CD14-positive monocyte (primary cell): ENCODE measurements at regions of chr15 and their contacts with region 1.

Region 1: GRCh38 chr15:74540761-74541493 is at the start of gene ARID3B:
- DNase-seq: peak; percentile 97 to 98 (median 97)
- H3K4me3 ChIP-seq: peak within 1 kb of the TSS; percentile 79 to 91 (median 84)
- H3K4me3 Mint-ChIP-seq: peak within 1 kb of the TSS; percentile 92 to 96
- H3K27ac ChIP-seq: peak within 1 kb of the TSS; percentile 69 to 84
- H3K27ac Mint-ChIP-seq: peak within 1 kb of the TSS; percentile 89 to 97 (median 95)
- H3K4me1 ChIP-seq: peaks cover 30 to 49% of the 10 kb centered on the region in 2 donors
- H3K4me1 Mint-ChIP-seq: peaks cover 46% of the 10 kb centered on the region
- H3K27me3 ChIP-seq: no peaks in the 10 kb centered on the region
- H3K27me3 Mint-ChIP-seq: peaks cover 3 to 8% (median 7%) of the 10 kb centered on the region in 3 donors
- CTCF ChIP-seq: no peak
- polyA plus RNA-seq, gene ARID3B: 2.3 to 17.4 (median 4.4) TPM

Region 2: GRCh38 chr15:74449643-74450205 is 91.2 kb before region 1 on chr15:
- intact Hi-C with region 1: no loop called
- DNase-seq: no peak
- H3K4me3 ChIP-seq: no peak overlapping the region
- H3K4me3 Mint-ChIP-seq: no peak overlapping the region
- H3K27ac ChIP-seq: no peak overlapping the region
- H3K27ac Mint-ChIP-seq: peak overlapping the region in 1 of 7 donors; percentile 21
- H3K4me1 ChIP-seq: no peaks in the 10 kb centered on the region
- H3K4me1 Mint-ChIP-seq: no peaks in the 10 kb centered on the region
- H3K27me3 ChIP-seq: no peaks in the 10 kb centered on the region
- H3K27me3 Mint-ChIP-seq: peaks cover 0 to 2% (median 1%) of the 10 kb centered on the region in 3 donors
- CTCF ChIP-seq: no peak

Region 3: GRCh38 chr15:74460871-74461846 is 79.8 kb before region 1 on chr15 and contains the start of gene UBL7:
- intact Hi-C with region 1: loop called (anchors 2 to 5 kb)
- DNase-seq: peak; percentile 94 to 96 (median 95)
- H3K4me3 ChIP-seq: peak within 1 kb of the TSS; percentile 63 to 93 (median 77)
- H3K4me3 Mint-ChIP-seq: peak within 1 kb of the TSS; percentile 94 to 95
- H3K27ac ChIP-seq: peak within 1 kb of the TSS; percentile 57 to 81
- H3K27ac Mint-ChIP-seq: peak within 1 kb of the TSS; percentile 86 to 96 (median 93)
- H3K4me1 ChIP-seq: peaks cover 18 to 27% of the 10 kb centered on the region in 2 donors
- H3K4me1 Mint-ChIP-seq: peaks cover 32% of the 10 kb centered on the region
- H3K27me3 ChIP-seq: no peaks in the 10 kb centered on the region
- H3K27me3 Mint-ChIP-seq: peaks cover 0 to 2% (median 0%) of the 10 kb centered on the region in 3 donors
- CTCF ChIP-seq: no peak
- polyA plus RNA-seq, gene UBL7: 43.4 to 103 (median 95.1) TPM

Region 4: GRCh38 chr15:74584779-74585178 is 43.9 kb after region 1 on chr15:
- intact Hi-C with region 1: no loop called
- DNase-seq: no peak
- H3K4me3 ChIP-seq: no peak overlapping the region
- H3K4me3 Mint-ChIP-seq: no peak overlapping the region
- H3K27ac ChIP-seq: no peak overlapping the region
- H3K27ac Mint-ChIP-seq: peak overlapping the region in 2 of 7 donors; percentile 26 to 75
- H3K4me1 ChIP-seq: peaks cover 17 to 18% of the 10 kb centered on the region in 2 donors
- H3K4me1 Mint-ChIP-seq: peaks cover 18% of the 10 kb centered on the region
- H3K27me3 ChIP-seq: no peaks in the 10 kb centered on the region
- H3K27me3 Mint-ChIP-seq: peaks cover 0 to 2% (median 0%) of the 10 kb centered on the region in 3 donors
- CTCF ChIP-seq: no peak

Region 5: DNA sequence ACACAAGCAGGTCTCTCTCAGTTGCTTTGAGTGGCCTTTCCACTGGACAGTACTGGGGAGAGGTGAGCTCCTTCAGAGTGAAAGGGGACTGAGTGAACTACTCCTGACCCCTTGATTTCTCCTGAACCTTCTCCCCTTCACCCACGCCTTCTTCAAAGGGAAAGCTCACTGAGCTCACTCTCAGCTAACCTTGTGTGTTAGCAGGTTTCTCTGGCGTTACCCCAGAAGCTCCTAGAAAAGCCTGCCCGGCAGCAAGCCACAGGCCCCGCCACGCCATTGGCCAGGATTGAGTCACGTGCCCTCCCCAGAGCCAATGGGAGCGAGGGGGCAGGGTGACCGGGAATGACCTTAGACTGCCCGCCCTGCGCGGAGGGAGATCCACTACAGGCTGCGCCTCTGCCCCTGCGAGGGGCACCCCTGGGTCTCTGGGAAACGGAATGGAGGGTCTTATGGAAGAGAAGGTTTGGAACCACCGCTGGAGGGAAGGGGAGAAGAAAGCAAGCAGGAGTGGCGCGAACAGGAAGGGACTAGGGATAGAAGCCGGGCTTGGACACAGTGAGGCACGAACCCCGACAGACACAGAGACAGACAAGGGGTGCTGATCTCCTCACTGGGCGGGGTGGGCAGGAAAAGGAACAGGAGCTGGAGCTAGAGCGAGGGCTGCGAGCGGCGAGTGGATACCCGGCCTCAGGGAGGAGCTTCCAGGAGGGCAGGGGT is 57.4 kb after region 1 on chr15:
- intact Hi-C with region 1: loop called in 1 of 2 experiments (anchors 5 kb)
- DNase-seq: peak; percentile 74 to 86 (median 80)
- H3K4me3 ChIP-seq: peak overlapping the region; percentile 63 to 97 (median 73)
- H3K4me3 Mint-ChIP-seq: peak overlapping the region; percentile 97 to 100
- H3K27ac ChIP-seq: peak overlapping the region; percentile 65 to 85
- H3K27ac Mint-ChIP-seq: peak overlapping the region; percentile 91 to 99 (median 96)
- H3K4me1 ChIP-seq: peaks cover 13 to 15% of the 10 kb centered on the region in 2 donors
- H3K4me1 Mint-ChIP-seq: peaks cover 15% of the 10 kb centered on the region
- H3K27me3 ChIP-seq: no peaks in the 10 kb centered on the region
- H3K27me3 Mint-ChIP-seq: no peaks in the 10 kb centered on the region
- CTCF ChIP-seq: no peak